Mammary epithelial cell (primary cell): ENCODE measurements at regions of chr16 and their contacts with region 1.

Region 1: GRCh38 chr16:22374311-22375116 is at the start of gene CDR2:
- DNase-seq: peak; percentile 96
- H3K4me3 ChIP-seq: peak within 1 kb of the TSS; percentile 72 to 91 (median 84)
- H3K27ac ChIP-seq: peak within 1 kb of the TSS; percentile 89
- H3K4me1 ChIP-seq: peaks cover 38% of the 10 kb centered on the region
- H3K27me3 ChIP-seq: no peaks in the 10 kb centered on the region
- CTCF ChIP-seq: no peak
- total RNA-seq, gene CDR2: 31.3 to 32.3 TPM

Region 2: GRCh38 chr16:22321339-22322001 is 53.0 kb before region 1 on chr16:
- CTCF ChIA-PET with region 1: no interaction called
- dilution Hi-C with region 1: loop called (anchors 5 kb)
- in situ Hi-C with region 1: no loop called
- intact Hi-C with region 1: loop called (anchors 1 kb)
- DNase-seq: peak; percentile 55
- H3K4me3 ChIP-seq: no peak overlapping the region
- H3K27ac ChIP-seq: no peak overlapping the region
- H3K4me1 ChIP-seq: peaks cover 4% of the 10 kb centered on the region
- H3K27me3 ChIP-seq: no peaks in the 10 kb centered on the region
- CTCF ChIP-seq: peak; percentile 91 to 92

Region 3: GRCh38 chr16:22353191-22353919 is 21.2 kb before region 1 on chr16:
- CTCF ChIA-PET with region 1: no interaction called
- dilution Hi-C with region 1: no loop called
- in situ Hi-C with region 1: no loop called
- intact Hi-C with region 1: loop called (anchors 1 kb)
- DNase-seq: peak; percentile 66
- H3K4me3 ChIP-seq: no peak overlapping the region
- H3K27ac ChIP-seq: peak overlapping the region; percentile 70
- H3K4me1 ChIP-seq: peaks cover 35% of the 10 kb centered on the region
- H3K27me3 ChIP-seq: no peaks in the 10 kb centered on the region
- CTCF ChIP-seq: no peak

Region 4: DNA sequence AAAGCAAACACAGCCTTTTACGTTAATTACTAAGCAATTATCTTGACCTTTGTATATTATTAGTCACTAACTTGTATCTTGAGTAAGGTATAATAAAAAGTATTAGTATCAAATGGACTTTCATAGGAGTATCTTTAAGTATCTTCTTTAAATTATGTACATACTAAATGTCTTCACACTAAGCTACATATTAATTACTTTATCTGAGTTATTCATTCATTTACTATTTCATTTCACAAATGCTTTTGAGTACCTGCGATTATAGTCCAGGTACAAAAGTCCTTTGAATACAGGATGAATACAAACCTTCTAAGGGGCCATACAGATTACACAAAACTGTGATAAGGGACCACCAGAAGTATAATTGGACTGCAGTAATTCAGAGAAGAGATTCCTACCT is 33.0 kb after region 1 on chr16:
- CTCF ChIA-PET with region 1: no interaction called
- dilution Hi-C with region 1: no loop called
- in situ Hi-C with region 1: no loop called
- intact Hi-C with region 1: no loop called
- DNase-seq: no peak
- H3K4me3 ChIP-seq: no peak overlapping the region
- H3K27ac ChIP-seq: no peak overlapping the region
- H3K4me1 ChIP-seq: peaks cover 6% of the 10 kb centered on the region
- H3K27me3 ChIP-seq: no peaks in the 10 kb centered on the region
- CTCF ChIP-seq: no peak

Region 5: GRCh38 chr16:22428654-22429053 is 54.1 kb after region 1 on chr16:
- CTCF ChIA-PET with region 1: interaction called, 22 read pairs
- dilution Hi-C with region 1: no loop called
- in situ Hi-C with region 1: no loop called
- intact Hi-C with region 1: no loop called
- DNase-seq: no peak
- H3K4me3 ChIP-seq: no peak overlapping the region
- H3K27ac ChIP-seq: no peak overlapping the region
- H3K4me1 ChIP-seq: peaks cover 5% of the 10 kb centered on the region
- H3K27me3 ChIP-seq: no peaks in the 10 kb centered on the region
- CTCF ChIP-seq: no peak